CD4-positive, alpha-beta T cell (primary cell): ENCODE measurements at regions of chr1 and their contacts with region 1.

Region 1: GRCh38 chr1:113565621-113566020 is 175.3 kb downstream of the MAGI3 start:
- DNase-seq: no peak
- ATAC-seq: no peak
- H3K4me3 ChIP-seq: no peak overlapping the region
- H3K4me3 Mint-ChIP-seq: no peak overlapping the region
- H3K27ac ChIP-seq: no peak overlapping the region
- H3K27ac Mint-ChIP-seq: no peak overlapping the region
- H3K4me1 ChIP-seq: no peaks in the 10 kb centered on the region
- H3K4me1 Mint-ChIP-seq: no peaks in the 10 kb centered on the region
- H3K27me3 ChIP-seq: no peaks in the 10 kb centered on the region
- H3K27me3 Mint-ChIP-seq: no peaks in the 10 kb centered on the region
- CTCF ChIP-seq: no peak

Region 2: DNA sequence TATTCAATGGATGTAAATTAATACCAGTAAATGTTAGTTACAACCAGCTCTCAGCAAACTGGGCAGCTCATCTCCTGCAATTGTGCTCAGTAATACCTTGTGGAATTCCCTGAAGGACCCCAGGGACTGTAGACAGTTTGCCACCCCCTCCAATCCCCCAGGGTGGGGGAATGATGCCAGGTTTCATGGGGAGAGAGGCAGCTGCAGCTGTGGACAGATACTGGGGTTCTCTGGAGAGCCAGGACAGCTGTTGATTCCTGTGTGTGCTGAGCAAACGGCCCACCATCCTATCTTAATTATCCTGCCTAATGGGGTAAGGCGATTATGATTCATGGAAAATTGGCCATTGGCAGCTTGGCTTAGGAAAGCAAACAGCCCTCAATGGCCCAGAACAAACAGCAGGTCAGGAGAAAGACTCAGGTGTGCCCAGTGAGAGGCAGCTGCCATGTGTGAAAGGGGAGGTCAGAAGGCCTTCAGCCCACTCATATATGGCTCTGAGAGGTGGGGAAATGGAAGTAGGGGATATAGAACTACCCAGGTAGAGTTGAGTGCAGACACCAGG is 1318.5 kb before region 1 on chr1:
- CTCF ChIA-PET with region 1: no interaction called
- POLR2A ChIA-PET with region 1: no interaction called
- intact Hi-C with region 1: no loop called
- DNase-seq: no peak
- ATAC-seq: no peak
- H3K4me3 ChIP-seq: no peak overlapping the region
- H3K4me3 Mint-ChIP-seq: no peak overlapping the region
- H3K27ac ChIP-seq: no peak overlapping the region
- H3K27ac Mint-ChIP-seq: no peak overlapping the region
- H3K4me1 ChIP-seq: no peaks in the 10 kb centered on the region
- H3K4me1 Mint-ChIP-seq: no peaks in the 10 kb centered on the region
- H3K27me3 ChIP-seq: no peaks in the 10 kb centered on the region
- H3K27me3 Mint-ChIP-seq: peaks cover 15% of the 10 kb centered on the region
- CTCF ChIP-seq: no peak

Region 3: DNA sequence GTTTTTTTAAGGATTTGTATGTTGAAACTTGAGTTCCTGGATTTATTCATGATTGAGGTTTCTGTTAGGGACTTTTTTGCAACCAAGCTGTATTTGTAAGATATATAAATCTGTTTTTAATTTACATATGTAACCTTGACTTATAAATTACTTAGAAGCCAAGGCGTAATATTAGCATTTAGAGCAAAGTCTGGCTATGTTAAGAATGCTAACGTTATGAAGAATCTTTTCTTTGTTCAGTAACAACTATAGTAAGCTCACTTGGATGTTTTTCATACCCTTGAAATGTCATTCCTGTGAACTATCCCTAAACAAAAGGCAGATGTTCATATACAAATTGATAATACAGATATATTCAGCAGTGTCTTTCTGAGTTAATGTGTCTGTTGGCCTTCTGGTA is 20.0 kb before region 1 on chr1:
- CTCF ChIA-PET with region 1: no interaction called
- POLR2A ChIA-PET with region 1: no interaction called
- intact Hi-C with region 1: loop called in 1 of 2 experiments (anchors 2 kb)
- DNase-seq: no peak
- ATAC-seq: no peak
- H3K4me3 ChIP-seq: no peak overlapping the region
- H3K4me3 Mint-ChIP-seq: no peak overlapping the region
- H3K27ac ChIP-seq: no peak overlapping the region
- H3K27ac Mint-ChIP-seq: no peak overlapping the region
- H3K4me1 ChIP-seq: no peaks in the 10 kb centered on the region
- H3K4me1 Mint-ChIP-seq: no peaks in the 10 kb centered on the region
- H3K27me3 ChIP-seq: no peaks in the 10 kb centered on the region
- H3K27me3 Mint-ChIP-seq: no peaks in the 10 kb centered on the region
- CTCF ChIP-seq: no peak